MCF 10A (cell line): ENCODE measurements at regions of chr3 and their contacts with region 1.

Region 1: DNA sequence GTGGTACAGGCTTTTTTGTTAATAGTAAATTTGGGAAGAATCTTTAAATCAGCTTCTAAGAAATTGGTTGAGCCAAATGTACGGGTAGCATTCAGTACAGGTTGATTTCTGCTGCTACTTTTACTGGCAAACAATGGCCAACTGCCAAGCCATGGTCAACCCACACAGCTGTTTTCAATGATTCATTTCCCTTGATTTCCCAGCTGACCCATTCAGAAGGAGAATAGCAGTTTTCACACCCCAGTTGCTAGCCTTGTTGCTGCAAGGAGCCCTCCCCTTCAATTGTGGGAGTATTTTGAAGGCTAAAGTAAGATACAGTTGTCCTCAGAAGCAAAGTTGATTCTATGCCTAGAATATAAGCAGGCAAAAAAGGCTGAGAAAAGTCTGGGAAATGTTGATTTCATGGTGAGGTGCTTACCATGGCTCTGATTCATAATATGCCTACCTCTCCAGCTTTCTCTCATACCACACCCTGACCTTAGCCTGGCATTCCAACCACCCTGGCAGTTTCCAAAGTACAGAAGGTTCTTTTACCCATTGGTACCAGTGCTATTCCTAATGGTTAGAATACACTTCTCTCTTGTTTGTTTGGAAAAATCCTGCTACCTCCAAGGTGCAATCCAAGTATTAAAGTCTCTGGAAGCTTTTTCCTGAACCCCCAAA is 320.3 kb upstream of the TGFBR2 start:
- DNase-seq: peak; percentile 97
- H3K4me3 Mint-ChIP-seq: peak overlapping the region; percentile 26
- H3K27ac Mint-ChIP-seq: peak overlapping the region; percentile 69
- H3K4me1 Mint-ChIP-seq: peaks cover 58% of the 10 kb centered on the region
- H3K27me3 Mint-ChIP-seq: no peaks in the 10 kb centered on the region
- CTCF ChIP-seq: no peak

Region 2: DNA sequence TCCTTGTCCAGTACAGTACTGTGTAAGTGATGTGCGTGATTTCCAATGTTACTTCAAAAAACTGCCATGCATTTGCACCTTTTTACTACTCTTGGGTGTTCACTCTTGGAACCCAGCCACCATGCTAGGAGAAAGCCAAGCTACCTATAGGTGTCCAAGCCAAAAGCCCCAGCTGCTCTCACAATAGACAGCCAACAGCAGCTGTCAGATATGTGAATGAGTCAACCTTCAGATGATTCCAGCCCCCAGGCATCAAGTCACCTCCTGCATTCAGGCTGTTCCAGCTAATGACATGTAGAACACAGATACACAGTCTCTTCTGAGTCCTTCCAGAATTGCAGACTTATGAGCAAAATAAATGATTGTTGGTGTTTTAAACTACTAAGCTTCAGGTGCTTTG is 97.4 kb before region 1 on chr3:
- CTCF ChIA-PET with region 1: no interaction called
- POLR2A ChIA-PET with region 1: no interaction called
- intact Hi-C with region 1: no loop called
- DNase-seq: peak; percentile 91
- H3K4me3 Mint-ChIP-seq: no peak overlapping the region
- H3K27ac Mint-ChIP-seq: no peak overlapping the region
- H3K4me1 Mint-ChIP-seq: peaks cover 8% of the 10 kb centered on the region
- H3K27me3 Mint-ChIP-seq: no peaks in the 10 kb centered on the region
- CTCF ChIP-seq: no peak

Region 3: DNA sequence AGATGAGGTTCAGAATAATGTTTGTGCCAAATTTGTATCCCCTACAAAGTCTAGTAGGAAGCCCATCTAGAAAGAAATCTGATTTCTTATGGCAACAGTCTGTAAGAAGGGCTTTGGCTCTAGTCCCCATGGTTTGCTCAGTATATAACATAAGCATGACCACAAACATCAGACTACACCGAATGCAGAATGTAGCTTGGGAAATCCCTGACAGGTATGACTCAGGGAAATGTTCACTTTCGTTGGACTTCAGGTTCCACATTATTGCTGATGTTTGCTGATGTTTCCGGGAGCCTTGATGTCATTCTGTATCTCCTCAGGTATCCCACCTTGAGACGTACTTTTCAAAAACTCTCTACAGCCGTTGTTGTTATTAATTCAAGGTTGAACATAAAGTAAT is 15.9 kb after region 1 on chr3:
- CTCF ChIA-PET with region 1: no interaction called
- POLR2A ChIA-PET with region 1: interaction called, 12 read pairs
- intact Hi-C with region 1: no loop called
- DNase-seq: peak; percentile 71
- H3K4me3 Mint-ChIP-seq: no peak overlapping the region
- H3K27ac Mint-ChIP-seq: peak overlapping the region; percentile 2
- H3K4me1 Mint-ChIP-seq: peaks cover 28% of the 10 kb centered on the region
- H3K27me3 Mint-ChIP-seq: no peaks in the 10 kb centered on the region
- CTCF ChIP-seq: no peak

Region 4: DNA sequence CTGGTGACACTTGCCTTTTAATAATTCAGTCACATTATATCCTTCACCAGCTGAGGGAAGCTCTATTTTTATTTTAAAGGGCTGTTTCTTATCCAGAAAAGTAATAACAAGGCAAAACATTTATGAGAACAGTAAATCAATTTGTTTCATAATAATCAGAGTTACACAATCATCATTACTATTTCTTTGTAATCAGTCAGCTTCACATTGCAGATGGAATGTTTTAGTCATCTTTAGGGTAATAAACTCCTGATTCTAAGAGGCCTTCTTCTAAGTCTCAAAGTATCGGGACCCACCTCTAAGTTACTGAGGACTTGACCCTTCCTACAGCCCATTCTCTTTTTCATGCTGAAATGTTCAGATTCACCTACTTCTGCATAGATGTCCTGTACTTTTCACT is 22.0 kb after region 1 on chr3:
- CTCF ChIA-PET with region 1: no interaction called
- POLR2A ChIA-PET with region 1: interaction called, 14 read pairs
- intact Hi-C with region 1: no loop called
- DNase-seq: peak; percentile 42
- H3K4me3 Mint-ChIP-seq: no peak overlapping the region
- H3K27ac Mint-ChIP-seq: no peak overlapping the region
- H3K4me1 Mint-ChIP-seq: peaks cover 37% of the 10 kb centered on the region
- H3K27me3 Mint-ChIP-seq: no peaks in the 10 kb centered on the region
- CTCF ChIP-seq: no peak

Region 5: DNA sequence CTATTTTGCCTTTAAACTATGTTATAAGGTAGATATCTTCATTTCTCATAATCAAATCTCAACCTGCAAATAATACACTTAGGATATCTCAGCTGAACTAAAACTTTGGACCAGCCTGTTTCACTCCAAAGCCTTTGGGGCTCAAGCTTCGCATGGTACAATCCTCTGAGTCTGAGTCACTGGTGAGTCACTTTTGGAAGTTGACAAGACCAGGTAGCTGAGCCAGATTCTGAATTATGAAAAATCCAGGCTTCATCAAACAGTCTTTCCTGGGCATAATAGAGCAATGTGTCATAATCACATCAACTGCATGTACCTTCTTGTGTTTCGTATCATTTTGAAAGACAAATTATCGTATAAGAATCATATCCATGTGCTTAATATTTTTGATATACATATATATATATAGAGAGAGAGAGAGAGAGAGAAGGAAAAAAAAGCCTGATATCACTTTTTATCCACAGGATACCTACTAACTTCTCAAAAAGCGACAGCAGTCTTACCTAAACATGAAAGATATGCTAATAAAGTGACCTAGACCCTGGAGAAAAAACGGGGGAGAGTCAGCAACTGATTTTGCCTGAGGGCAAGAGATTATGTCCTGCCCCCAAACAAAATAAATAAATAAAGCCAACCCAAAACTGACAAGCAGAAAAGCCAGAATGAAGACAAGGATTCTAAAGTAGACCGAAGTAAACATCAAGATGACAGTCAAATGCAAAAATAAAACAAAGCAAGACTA is 56.4 kb after region 1 on chr3:
- CTCF ChIA-PET with region 1: interaction called, 3 read pairs
- POLR2A ChIA-PET with region 1: interaction called, 11 read pairs
- intact Hi-C with region 1: loop called (anchors 2 kb)
- DNase-seq: peak; percentile 97
- H3K4me3 Mint-ChIP-seq: peak overlapping the region; percentile 38
- H3K27ac Mint-ChIP-seq: peak overlapping the region; percentile 94
- H3K4me1 Mint-ChIP-seq: peaks cover 39% of the 10 kb centered on the region
- H3K27me3 Mint-ChIP-seq: no peaks in the 10 kb centered on the region
- CTCF ChIP-seq: no peak

Region 6: DNA sequence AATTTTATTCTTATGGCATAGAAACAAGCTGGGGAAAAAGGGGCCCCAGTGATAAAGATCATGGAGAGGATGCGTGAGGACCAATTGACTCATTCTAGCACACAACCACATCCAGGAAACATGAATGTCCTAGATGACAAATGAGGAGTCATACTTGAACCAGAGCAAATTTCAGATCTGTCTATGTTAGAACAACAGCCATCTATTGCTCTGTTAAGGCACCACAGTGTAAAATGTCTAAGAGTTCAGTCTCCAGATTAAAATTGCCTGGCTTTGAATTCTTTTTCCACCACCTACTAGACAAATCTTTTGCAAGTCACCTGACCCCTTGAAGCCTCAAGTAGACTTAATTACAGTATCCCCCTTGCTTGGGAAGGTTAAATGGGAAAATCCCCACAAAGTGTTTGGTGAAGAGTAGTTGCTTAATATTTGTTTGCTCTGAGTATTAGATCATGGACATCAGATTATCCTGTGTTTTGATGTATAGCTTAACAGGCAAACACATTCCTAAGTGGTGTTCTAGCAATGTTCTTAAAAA is 61.6 kb after region 1 on chr3:
- CTCF ChIA-PET with region 1: interaction called, 3 read pairs
- POLR2A ChIA-PET with region 1: interaction called, 11 read pairs
- intact Hi-C with region 1: loop called (anchors 2 kb)
- DNase-seq: peak; percentile 85
- H3K4me3 Mint-ChIP-seq: no peak overlapping the region
- H3K27ac Mint-ChIP-seq: peak overlapping the region; percentile 76
- H3K4me1 Mint-ChIP-seq: peaks cover 54% of the 10 kb centered on the region
- H3K27me3 Mint-ChIP-seq: no peaks in the 10 kb centered on the region
- CTCF ChIP-seq: no peak

Region 7: DNA sequence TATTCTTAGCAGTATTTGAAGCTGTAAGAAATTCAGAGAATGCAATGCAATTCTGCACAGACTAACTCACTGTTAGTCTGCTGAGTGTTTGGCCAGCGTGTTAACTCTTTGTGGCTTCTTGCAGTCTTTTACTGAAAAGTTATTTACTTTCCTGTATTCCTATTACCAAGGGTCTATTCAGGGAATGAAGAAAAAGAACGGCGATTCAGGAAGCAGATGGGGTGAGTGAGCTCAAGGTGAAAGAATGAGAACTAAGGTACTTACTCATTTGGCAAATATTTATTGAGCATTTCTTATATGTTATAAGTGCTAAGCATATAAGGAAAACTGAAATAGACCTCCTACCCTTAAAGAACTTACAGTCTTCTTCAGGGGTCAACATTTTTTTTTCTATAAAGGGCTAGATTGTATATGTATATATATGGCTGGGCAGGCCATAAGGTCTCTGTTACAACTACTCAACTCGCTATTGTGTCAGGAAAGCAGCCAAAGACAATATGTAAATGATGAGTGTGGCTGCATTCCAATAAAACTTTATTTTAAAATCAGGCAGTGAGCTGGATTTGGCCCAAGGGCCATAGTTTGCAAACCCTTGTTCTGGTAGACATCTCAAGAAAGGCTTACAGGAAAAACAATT is 880.2 kb after region 1 on chr3:
- CTCF ChIA-PET with region 1: no interaction called
- POLR2A ChIA-PET with region 1: no interaction called
- intact Hi-C with region 1: no loop called
- DNase-seq: peak; percentile 73
- H3K4me3 Mint-ChIP-seq: no peak overlapping the region
- H3K27ac Mint-ChIP-seq: peak overlapping the region; percentile 66
- H3K4me1 Mint-ChIP-seq: peaks cover 41% of the 10 kb centered on the region
- H3K27me3 Mint-ChIP-seq: no peaks in the 10 kb centered on the region
- CTCF ChIP-seq: no peak